ENCODE measurements at regions of chr12 and their contacts with region 1.

Region 1: GRCh38 chr12:123905319-123905925 is 67.2 kb downstream of the CCDC92 start:
- DNase-seq: peak; percentile 65 to 68
- H3K4me3 ChIP-seq: no peak overlapping the region
- H3K27ac ChIP-seq: no peak overlapping the region
- H3K4me1 ChIP-seq: no peaks in the 10 kb centered on the region
- H3K27me3 ChIP-seq: no peaks in the 10 kb centered on the region
- CTCF ChIP-seq: peak; percentile 57 to 72 (median 65)
- POLR2A ChIP-seq: no peak

Region 2: DNA sequence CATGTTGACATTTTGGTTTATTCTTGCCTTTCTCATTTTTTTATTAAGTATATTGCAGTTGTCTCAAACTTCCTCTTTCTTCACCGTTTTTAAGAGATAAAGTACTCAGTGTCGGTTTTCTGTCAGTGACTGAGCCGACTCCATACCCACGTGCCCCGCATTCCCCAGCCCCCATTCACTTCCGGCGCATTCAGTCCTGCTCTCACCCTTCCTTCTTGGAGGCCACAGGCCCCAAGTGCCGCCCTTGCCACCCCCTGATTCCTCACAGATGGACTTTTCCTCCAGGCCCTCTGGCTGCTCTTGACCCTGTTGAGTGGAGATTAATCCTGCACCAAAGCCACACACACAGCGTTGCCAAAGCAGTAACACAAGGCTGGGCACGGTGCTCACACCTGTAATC is 162.4 kb before region 1 on chr12:
- intact Hi-C with region 1: loop called (anchors 5 kb)
- DNase-seq: no peak
- H3K4me3 ChIP-seq: no peak overlapping the region
- H3K27ac ChIP-seq: no peak overlapping the region
- H3K4me1 ChIP-seq: no peaks in the 10 kb centered on the region
- H3K27me3 ChIP-seq: no peaks in the 10 kb centered on the region
- CTCF ChIP-seq: no peak
- POLR2A ChIP-seq: no peak

Region 3: DNA sequence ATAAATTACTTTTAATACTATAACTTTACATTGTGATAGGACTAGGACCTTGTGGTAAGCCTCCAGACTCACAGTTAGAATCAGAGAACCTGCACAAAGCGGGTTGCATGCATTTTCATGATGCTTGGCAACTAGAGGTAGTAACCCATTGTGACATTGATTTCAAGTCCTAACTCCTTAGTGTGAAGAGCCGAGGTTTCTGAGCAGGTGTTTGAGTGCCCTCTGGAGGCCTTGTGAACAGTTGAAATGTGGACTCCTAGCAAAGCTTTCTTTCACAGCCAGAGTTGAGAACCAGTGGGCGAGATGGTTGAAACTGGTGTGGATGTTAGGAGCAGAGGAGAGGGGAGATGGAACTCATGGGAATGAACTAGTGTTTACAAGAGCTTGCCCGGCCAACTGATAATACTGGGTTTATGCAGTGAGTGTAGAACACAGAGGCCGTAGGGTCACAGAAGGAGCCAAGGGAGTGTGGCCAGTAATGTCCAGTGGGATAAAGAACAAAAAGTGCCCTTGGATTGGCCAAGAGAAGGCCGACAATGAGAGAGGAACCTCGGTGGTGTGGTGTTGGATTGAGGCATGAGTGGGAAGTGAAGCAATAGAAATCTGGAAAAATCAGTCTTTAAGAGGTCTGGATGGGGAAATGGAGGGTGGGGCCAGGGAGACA is 78.5 kb after region 1 on chr12:
- intact Hi-C with region 1: loop called (anchors 5 kb)
- DNase-seq: peak; percentile 36 to 41
- H3K4me3 ChIP-seq: no peak overlapping the region
- H3K27ac ChIP-seq: peak overlapping the region in 1 of 2 donors; percentile 2
- H3K4me1 ChIP-seq: no peaks in the 10 kb centered on the region
- H3K27me3 ChIP-seq: no peaks in the 10 kb centered on the region
- CTCF ChIP-seq: peak; percentile 39 to 62 (median 58)
- POLR2A ChIP-seq: no peak